ENCODE measurements at regions of chr2 and their contacts with region 1.

Region 1: GRCh38 chr2:116269040-116269439 is 1545.5 kb upstream of the DDX18 start:
- DNase-seq: no peak
- ATAC-seq: no peak
- H3K4me3 ChIP-seq: no peak overlapping the region
- H3K27ac ChIP-seq: no peak overlapping the region
- H3K4me1 ChIP-seq: no peaks in the 10 kb centered on the region
- H3K27me3 ChIP-seq: no peaks in the 10 kb centered on the region
- CTCF ChIP-seq: no peak
- EP300 ChIP-seq: no peak
- POLR2A ChIP-seq: no peak
- RAD21 ChIP-seq: no peak

Region 2: DNA sequence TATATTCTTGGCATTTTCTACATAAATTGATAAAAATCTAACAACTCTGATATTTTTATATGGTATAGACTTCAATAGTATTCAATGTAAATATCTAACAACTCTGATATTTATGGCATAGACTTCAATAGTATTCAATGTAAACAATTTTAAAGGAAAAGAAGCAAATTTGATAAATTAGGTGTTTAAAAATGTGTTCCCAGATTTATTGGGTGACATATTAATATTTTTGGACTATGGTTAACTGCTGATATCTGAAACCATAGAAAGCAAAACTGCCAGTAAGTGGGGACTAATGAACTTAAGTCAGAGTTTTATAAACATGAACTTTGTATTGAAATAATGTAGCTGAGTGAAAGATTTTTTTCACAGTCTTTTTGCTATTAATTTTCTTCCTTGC is 30.5 kb before region 1 on chr2:
- CTCF ChIA-PET with region 1: no interaction called
- POLR2A ChIA-PET with region 1: no interaction called
- in situ Hi-C with region 1: no loop called
- intact Hi-C with region 1: loop called (anchors 1 kb)
- DNase-seq: no peak
- ATAC-seq: no peak
- H3K4me3 ChIP-seq: no peak overlapping the region
- H3K27ac ChIP-seq: no peak overlapping the region
- H3K4me1 ChIP-seq: no peaks in the 10 kb centered on the region
- H3K27me3 ChIP-seq: no peaks in the 10 kb centered on the region
- CTCF ChIP-seq: no peak
- EP300 ChIP-seq: no peak
- POLR2A ChIP-seq: no peak
- RAD21 ChIP-seq: no peak